A549 (cell line): ENCODE measurements at regions of chr22 and their contacts with region 1.

Region 1: GRCh38 chr22:20531315-20532201 is 24.1 kb downstream of the MED15 start:
- DNase-seq: peak; percentile 68 to 87
- ATAC-seq: peak; percentile 92
- H3K4me3 ChIP-seq: no peak overlapping the region
- H3K27ac ChIP-seq: peak overlapping the region; percentile 91 to 92
- H3K4me1 ChIP-seq: peaks cover 58% of the 10 kb centered on the region
- CTCF ChIP-seq: no peak
- EP300 ChIP-seq: no peak
- POLR2A ChIP-seq: peak; percentile 42
- RAD21 ChIP-seq: no peak

Region 2: DNA sequence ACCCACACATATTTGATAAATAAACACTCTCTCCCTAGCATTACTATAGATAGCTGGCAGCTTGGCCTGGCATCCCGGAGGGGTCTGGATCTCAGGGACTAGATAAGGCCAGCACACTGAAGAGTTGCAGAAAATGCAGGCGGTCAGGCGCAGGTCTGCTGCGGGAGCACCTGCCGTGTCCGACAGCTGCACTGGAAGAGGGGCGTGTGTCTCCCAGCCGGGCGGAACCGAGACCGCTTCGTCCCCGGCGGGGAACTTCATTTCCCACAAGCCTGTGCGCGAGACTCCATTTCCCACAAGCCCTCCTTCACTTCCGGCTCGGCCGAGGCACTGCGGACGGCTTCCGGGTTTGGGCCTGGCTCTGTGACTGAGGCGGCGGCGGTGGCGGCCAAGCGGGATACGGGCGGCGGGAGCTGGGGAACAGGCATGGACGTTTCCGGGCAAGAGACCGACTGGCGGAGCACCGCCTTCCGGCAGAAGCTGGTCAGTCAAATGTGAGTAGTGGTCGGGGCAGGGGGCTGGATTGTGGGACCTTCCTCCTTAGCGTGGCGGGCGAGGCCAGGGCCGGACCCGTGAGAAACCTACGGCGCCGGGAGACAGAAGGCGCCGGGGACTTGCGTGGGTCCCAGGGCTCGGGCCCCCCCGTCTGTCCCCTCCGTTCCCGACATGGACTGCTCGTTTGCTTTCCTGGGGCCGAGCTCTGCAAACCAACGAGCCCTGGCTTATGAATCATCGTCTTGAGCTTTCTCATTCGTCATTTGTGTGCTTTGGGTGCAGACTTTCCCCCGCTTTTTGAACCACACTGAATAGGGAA is 24.1 kb before region 1 on chr22 and contains the start of gene MED15:
- CTCF ChIA-PET with region 1: interaction called, 9 read pairs
- POLR2A ChIA-PET with region 1: interaction called, 20 read pairs
- DNase-seq: peak; percentile 64 to 87
- ATAC-seq: peak; percentile 87 to 88
- H3K4me3 ChIP-seq: peak within 1 kb of the TSS; percentile 85
- H3K27ac ChIP-seq: peak within 1 kb of the TSS; percentile 95 to 98
- H3K4me1 ChIP-seq: peaks cover 55% of the 10 kb centered on the region
- CTCF ChIP-seq: no peak
- EP300 ChIP-seq: no peak
- POLR2A ChIP-seq: peak; percentile 60
- RAD21 ChIP-seq: no peak
- polyA plus RNA-seq, gene MED15: 10.7 and 11.3 TPM in 2 replicates